Left ventricle myocardium inferior (tissue), 1 donor: ENCODE measurements at regions of chr4 and their contacts with region 1.

Region 1: GRCh38 chr4:107757864-107758476 is 37.9 kb upstream of the PAPSS1 start:
- DNase-seq: no peak
- H3K4me3 ChIP-seq: no peak overlapping the region
- H3K27ac ChIP-seq: no peak overlapping the region
- H3K4me1 ChIP-seq: no peaks in the 10 kb centered on the region
- H3K27me3 ChIP-seq: no peaks in the 10 kb centered on the region
- CTCF ChIP-seq: peak; percentile 71

Region 2: DNA sequence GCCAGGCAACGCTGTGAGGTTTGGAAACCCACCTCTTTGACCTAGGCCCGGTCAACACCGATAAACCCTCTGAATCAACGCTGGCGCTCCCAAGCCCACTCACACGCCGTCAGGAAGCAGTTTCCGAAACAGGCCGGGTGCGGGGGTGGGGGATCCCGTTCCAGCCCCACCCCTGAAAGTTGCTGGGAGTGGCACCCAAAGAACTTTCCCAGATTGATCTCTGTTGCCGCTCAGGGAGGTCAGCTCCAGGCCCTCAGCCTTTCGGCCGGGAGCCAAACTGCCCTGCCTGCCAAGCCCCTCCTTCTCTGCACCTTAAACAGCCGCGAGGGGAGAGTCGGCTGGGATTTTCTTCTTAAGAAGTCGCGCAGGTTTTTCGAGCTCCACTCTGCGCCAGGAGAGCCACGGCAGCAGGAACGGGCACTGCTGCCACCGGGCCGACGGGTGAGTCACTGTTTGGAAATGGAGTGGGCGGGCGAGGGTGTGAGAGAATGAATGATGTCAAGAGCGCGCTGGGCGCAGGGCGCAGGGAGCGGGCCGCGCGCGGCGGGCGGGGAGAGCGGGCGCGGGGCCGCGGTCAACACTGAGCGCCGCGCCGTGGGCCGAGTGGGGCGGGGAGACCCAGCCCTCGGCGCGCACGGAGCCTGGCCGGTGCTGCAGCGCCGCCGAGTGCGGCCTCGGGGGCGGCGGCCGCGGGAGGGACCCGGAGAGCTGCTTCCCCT is 66.5 kb after region 1 on chr4 and contains the start of gene SGMS2:
- intact Hi-C with region 1: loop called (anchors 10 kb)
- DNase-seq: peak; percentile 86
- H3K4me3 ChIP-seq: peak within 1 kb of the TSS; percentile 89
- H3K27ac ChIP-seq: peak within 1 kb of the TSS; percentile 94
- H3K4me1 ChIP-seq: peaks cover 53% of the 10 kb centered on the region
- H3K27me3 ChIP-seq: no peaks in the 10 kb centered on the region
- CTCF ChIP-seq: no peak
- total RNA-seq, gene SGMS2: 21.4 TPM

Region 3: GRCh38 chr4:107888237-107888636 is 130.3 kb after region 1 on chr4:
- intact Hi-C with region 1: no loop called
- DNase-seq: no peak
- H3K4me3 ChIP-seq: no peak overlapping the region
- H3K27ac ChIP-seq: no peak overlapping the region
- H3K4me1 ChIP-seq: no peaks in the 10 kb centered on the region
- H3K27me3 ChIP-seq: no peaks in the 10 kb centered on the region
- CTCF ChIP-seq: no peak

Region 4: DNA sequence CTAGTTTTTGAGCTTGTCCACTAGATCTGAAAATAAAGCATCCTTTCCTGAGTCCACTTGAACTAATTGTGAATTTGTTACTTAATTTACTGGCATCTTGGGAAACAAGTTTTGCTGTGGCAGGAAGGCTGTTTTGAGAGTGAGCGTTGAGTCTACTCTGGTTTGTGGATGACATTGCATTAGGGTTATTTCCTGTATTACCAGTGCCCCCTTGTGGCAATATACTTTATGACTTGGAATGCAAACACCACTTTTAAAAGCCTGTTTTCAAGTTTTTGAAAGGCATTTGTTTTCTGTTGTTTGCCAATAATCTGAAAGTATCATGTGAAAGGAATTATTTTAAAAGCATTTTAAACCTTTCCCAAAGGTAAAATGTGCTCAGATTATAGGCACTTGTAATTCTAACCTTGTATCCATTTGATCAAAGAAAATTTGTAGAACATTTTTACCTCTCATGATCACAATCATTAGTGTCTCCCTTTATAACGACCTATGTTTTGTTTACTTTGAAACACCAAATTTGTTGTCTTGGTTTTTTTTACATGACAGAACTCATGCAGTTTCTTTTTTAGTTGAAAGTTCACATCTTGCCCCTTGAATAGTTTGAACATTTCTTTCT is 155.4 kb after region 1 on chr4:
- intact Hi-C with region 1: loop called (anchors 2 kb)
- DNase-seq: no peak
- H3K4me3 ChIP-seq: no peak overlapping the region
- H3K27ac ChIP-seq: no peak overlapping the region
- H3K4me1 ChIP-seq: no peaks in the 10 kb centered on the region
- H3K27me3 ChIP-seq: no peaks in the 10 kb centered on the region
- CTCF ChIP-seq: peak; percentile 81